ENCODE measurements at regions of chr9 and their contacts with region 1.

Region 1: GRCh38 chr9:6305954-6306563 is 22.1 kb upstream of the TPD52L3 start:
- DNase-seq: peak; percentile 69
- ATAC-seq: peak; percentile 81
- H3K4me3 ChIP-seq: no peak overlapping the region
- H3K27ac ChIP-seq: peak overlapping the region; percentile 47; the same call in 1 of the 2 replicates
- H3K4me1 ChIP-seq: peaks cover 19% of the 10 kb centered on the region
- H3K27me3 ChIP-seq: no peaks in the 10 kb centered on the region
- CTCF ChIP-seq: peak; percentile 72

Region 2: GRCh38 chr9:5886114-5886939 is 419.7 kb before region 1 on chr9:
- CTCF ChIA-PET with region 1: no interaction called
- POLR2A ChIA-PET with region 1: no interaction called
- intact Hi-C with region 1: loop called (anchors 2 kb)
- DNase-seq: peak; percentile 73
- ATAC-seq: peak; percentile 97
- H3K4me3 ChIP-seq: no peak overlapping the region
- H3K27ac ChIP-seq: no peak overlapping the region
- H3K4me1 ChIP-seq: peaks cover 10% of the 10 kb centered on the region; the same call in 1 of the 2 replicates
- H3K27me3 ChIP-seq: no peaks in the 10 kb centered on the region
- CTCF ChIP-seq: peak; percentile 88

Region 3: DNA sequence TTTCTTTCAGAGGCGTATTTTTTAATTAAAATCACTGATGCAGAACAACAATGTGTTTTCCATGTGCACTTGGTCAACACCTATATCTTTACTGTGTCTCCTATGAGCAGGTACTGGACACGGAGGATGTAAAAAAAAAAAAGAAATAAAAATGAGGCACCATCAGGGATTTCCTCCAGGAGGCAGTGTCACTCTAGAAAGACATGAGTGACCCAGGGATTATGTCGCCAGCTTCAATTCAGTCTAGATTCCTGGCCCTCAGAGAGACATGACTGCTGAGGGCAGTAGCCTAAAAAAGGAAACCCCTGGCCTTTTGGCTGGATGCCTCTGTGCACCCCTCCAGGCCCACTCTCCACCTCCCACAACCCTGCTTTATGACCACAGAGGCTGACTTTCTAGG is 108.7 kb before region 1 on chr9:
- CTCF ChIA-PET with region 1: interaction called, 22 read pairs
- POLR2A ChIA-PET with region 1: no interaction called
- intact Hi-C with region 1: loop called (anchors 1 kb)
- DNase-seq: peak; percentile 50
- ATAC-seq: no peak
- H3K4me3 ChIP-seq: no peak overlapping the region
- H3K27ac ChIP-seq: peak overlapping the region; percentile 96
- H3K4me1 ChIP-seq: peaks cover 53% of the 10 kb centered on the region
- H3K27me3 ChIP-seq: no peaks in the 10 kb centered on the region
- CTCF ChIP-seq: peak; percentile 53

Measured in PC-3 (cell line).